HCT116 (cell line): ENCODE measurements at regions of chr17 and their contacts with region 1.

Region 1: DNA sequence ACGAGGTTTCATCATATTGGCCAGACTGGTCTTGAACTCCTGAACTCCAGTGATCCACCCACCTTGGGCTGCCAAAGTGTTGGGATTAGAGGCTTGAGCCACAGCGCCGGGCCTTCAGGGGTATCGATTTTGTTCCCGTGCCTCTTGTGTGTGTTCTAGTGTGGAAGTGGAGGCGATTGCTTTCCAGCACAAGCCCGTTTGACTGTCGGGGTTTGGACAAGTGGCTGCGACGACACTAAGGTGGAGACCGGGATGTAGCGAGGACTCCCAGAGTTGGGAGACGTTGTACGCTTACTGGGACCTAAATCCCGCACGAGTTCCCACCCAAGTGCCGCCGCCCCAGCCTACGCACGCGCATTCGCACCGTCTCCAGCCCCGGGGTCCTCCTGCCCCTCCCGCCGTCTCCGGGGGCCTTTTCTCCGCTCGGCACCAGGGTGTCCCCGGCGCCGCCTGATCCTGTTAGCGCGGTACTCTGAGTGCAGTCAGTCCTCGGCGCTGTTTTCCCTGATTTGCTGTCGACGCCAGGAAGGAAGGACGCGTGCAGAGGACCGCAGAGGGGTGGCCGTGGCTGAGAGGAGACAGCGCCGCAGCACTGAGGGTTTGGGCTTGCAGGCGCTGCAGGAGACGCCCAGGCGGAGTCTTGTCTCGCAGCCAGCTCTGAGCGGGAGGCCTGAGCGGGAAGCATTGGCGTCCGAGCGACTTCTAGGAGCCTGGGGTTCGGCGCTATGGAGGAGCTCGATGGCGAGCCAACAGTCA is at the start of gene NUP85:
- DNase-seq: peak; percentile 96
- ATAC-seq: peak; percentile 87
- H3K4me3 ChIP-seq: peak within 1 kb of the TSS; percentile 75 to 85
- H3K27ac ChIP-seq: peak within 1 kb of the TSS; percentile 85
- H3K4me1 ChIP-seq: peaks cover 11 to 27% of the 10 kb centered on the region in 2 experiments
- H3K27me3 ChIP-seq: no peaks in the 10 kb centered on the region
- CTCF ChIP-seq: no peak
- POLR2A ChIP-seq: peak; percentile 98
- RAD21 ChIP-seq: no peak
- total RNA-seq, gene NUP85: 164 TPM

Region 2: DNA sequence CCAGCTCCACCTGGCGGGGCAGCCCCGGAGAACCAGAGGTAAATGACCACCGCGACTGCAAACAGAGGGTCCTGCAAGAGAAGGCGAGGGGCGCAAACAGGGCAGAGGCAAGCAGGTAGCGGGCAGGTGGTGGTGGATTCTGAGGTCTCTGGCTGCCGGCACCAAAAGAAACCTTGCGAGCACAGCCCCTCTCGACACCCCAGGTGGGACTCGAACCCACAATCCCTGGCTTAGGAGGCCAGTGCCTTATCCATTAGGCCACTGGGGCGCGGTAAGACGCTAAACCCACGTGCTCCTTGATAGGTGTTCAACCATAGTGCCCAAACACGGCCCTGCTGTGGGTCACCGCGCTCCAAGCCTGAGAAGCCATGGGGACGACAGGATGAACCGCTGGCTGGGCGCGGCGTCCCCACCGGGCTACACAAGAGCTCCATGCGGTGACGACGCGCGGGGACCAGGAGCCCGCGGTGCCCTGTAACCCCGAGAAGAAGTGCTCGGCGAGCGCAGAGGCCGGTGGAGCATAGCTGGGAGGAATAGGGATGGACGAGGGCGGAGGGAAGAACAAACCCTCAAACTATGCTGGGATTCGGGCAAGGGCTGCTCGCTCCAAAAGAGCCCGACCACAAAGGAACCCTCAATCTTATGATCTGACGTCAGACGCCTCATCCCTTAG is 170.8 kb before region 1 on chr17:
- CTCF ChIA-PET with region 1: interaction called, 7 read pairs
- POLR2A ChIA-PET with region 1: interaction called, 3 read pairs
- RAD21 ChIA-PET with region 1: interaction called in 1 of 2 experiments, 3 read pairs
- intact Hi-C with region 1: loop called (anchors 2 kb)
- DNase-seq: peak; percentile 93
- ATAC-seq: peak; percentile 62
- H3K4me3 ChIP-seq: peak overlapping the region; percentile 46 to 57
- H3K27ac ChIP-seq: peak overlapping the region; percentile 87
- H3K4me1 ChIP-seq: peaks cover 45 to 58% of the 10 kb centered on the region in 2 experiments
- H3K27me3 ChIP-seq: no peaks in the 10 kb centered on the region
- CTCF ChIP-seq: peak in 2 of 3 experiments; percentile 7 to 37; a peak in 1 of 6 replicates
- POLR2A ChIP-seq: no peak
- RAD21 ChIP-seq: no peak

Region 3: GRCh38 chr17:75059369-75060345 is 145.6 kb before region 1 on chr17:
- CTCF ChIA-PET with region 1: interaction called, 19 read pairs
- POLR2A ChIA-PET with region 1: no interaction called
- RAD21 ChIA-PET with region 1: interaction called, 4 to 7 read pairs
- intact Hi-C with region 1: no loop called
- DNase-seq: no peak
- ATAC-seq: peak; percentile 67; the same call in 1 of the 2 replicates
- H3K4me3 ChIP-seq: no peak overlapping the region
- H3K27ac ChIP-seq: no peak overlapping the region
- H3K4me1 ChIP-seq: peaks cover 0 to 4% of the 10 kb centered on the region in 2 experiments; a peak in 1 of 4 replicates
- H3K27me3 ChIP-seq: no peaks in the 10 kb centered on the region
- CTCF ChIP-seq: peak; percentile 39 to 54 (median 41); a peak in 5 of 6 replicates
- POLR2A ChIP-seq: no peak
- RAD21 ChIP-seq: peak; percentile 69

Region 4: GRCh38 chr17:75069783-75070182 is 135.4 kb before region 1 on chr17:
- CTCF ChIA-PET with region 1: interaction called, 25 read pairs
- POLR2A ChIA-PET with region 1: no interaction called
- RAD21 ChIA-PET with region 1: interaction called in 1 of 2 experiments, 10 read pairs
- intact Hi-C with region 1: loop called (anchors 5 kb)
- DNase-seq: no peak
- ATAC-seq: peak; percentile 76
- H3K4me3 ChIP-seq: no peak overlapping the region
- H3K27ac ChIP-seq: no peak overlapping the region
- H3K4me1 ChIP-seq: peaks cover 14% of the 10 kb centered on the region in 2 experiments
- H3K27me3 ChIP-seq: no peaks in the 10 kb centered on the region
- CTCF ChIP-seq: peak; percentile 55 to 87 (median 57)
- POLR2A ChIP-seq: no peak
- RAD21 ChIP-seq: peak; percentile 90

Region 5: DNA sequence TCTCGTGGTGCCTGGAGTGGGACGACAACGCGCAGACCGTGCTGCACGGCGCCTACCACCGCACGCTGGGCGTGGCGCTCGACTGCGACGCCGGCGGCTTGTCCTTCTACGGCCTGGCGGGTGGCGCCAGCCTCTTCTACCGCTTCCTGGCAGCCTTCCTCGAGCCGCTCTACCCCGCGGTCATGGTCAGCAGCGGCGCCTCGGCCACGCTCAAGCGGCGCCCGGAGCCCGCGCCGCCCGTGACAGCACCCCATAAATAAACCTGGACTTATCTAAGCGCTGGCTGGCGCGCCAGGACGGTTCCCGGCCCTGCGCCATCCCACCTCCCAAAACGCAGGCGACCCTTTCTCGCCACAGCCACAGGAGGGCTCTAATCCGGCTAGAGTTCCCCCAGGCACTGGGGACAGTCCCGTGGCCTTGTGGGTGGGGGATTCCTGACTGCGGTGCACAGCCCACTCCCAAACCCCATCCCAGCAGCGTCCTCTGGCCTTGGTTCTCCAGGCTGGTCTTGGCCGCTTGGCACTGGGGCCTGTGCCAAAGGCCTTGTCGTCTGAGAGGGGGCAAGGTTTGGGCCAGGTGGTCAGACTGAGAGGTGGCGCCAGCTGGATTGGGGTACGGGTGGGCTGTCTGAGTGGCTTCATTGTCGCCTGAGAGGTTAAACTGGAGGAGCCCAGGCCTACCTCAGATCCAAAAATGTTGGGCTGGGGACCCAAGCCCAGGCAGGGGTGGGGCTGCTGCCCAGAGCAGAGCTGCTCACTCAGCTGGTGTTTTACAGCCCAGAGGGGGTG is 127.5 kb before region 1 on chr17:
- CTCF ChIA-PET with region 1: interaction called, 10 read pairs
- POLR2A ChIA-PET with region 1: no interaction called
- RAD21 ChIA-PET with region 1: no interaction called
- intact Hi-C with region 1: loop called (anchors 5 kb)
- DNase-seq: no peak
- ATAC-seq: peak; percentile 45
- H3K4me3 ChIP-seq: peak overlapping the region; percentile 31 to 46
- H3K27ac ChIP-seq: peak overlapping the region; percentile 100
- H3K4me1 ChIP-seq: peaks cover 76 to 79% of the 10 kb centered on the region in 2 experiments
- H3K27me3 ChIP-seq: no peaks in the 10 kb centered on the region
- CTCF ChIP-seq: peak in 2 of 3 experiments; percentile 29 to 31; a peak in 2 of 6 replicates
- POLR2A ChIP-seq: no peak
- RAD21 ChIP-seq: no peak; the same call in 1 of the 2 replicates

Region 6: GRCh38 chr17:75124041-75124818 is 81.0 kb before region 1 on chr17:
- CTCF ChIA-PET with region 1: interaction called, 10 read pairs
- POLR2A ChIA-PET with region 1: interaction called, 4 read pairs
- RAD21 ChIA-PET with region 1: no interaction called
- intact Hi-C with region 1: no loop called
- DNase-seq: peak; percentile 99
- ATAC-seq: peak; percentile 90
- H3K4me3 ChIP-seq: peak overlapping the region; percentile 44 to 55
- H3K27ac ChIP-seq: peak overlapping the region; percentile 93
- H3K4me1 ChIP-seq: peaks cover 40 to 71% of the 10 kb centered on the region in 2 experiments
- H3K27me3 ChIP-seq: no peaks in the 10 kb centered on the region
- CTCF ChIP-seq: 0 out of 6 replicates have a peak, but pooled peaks of 1 of the 3 experiments have one; percentile 3
- POLR2A ChIP-seq: peak; percentile 77
- RAD21 ChIP-seq: no peak

Region 7: GRCh38 chr17:75261336-75262111 is 56.3 kb after region 1 on chr17 and contains the starts of genes GGA3 and MRPS7:
- CTCF ChIA-PET with region 1: no interaction called
- POLR2A ChIA-PET with region 1: interaction called, 3 read pairs
- RAD21 ChIA-PET with region 1: no interaction called
- intact Hi-C with region 1: loop called (anchors 1 kb)
- DNase-seq: peak; percentile 89
- ATAC-seq: peak; percentile 95
- H3K4me3 ChIP-seq: peak within 1 kb of the TSS; percentile 83 to 97
- H3K27ac ChIP-seq: peak within 1 kb of the TSS; percentile 80
- H3K4me1 ChIP-seq: peaks cover 17 to 21% of the 10 kb centered on the region in 2 experiments
- H3K27me3 ChIP-seq: no peaks in the 10 kb centered on the region
- CTCF ChIP-seq: no peak
- POLR2A ChIP-seq: no peak
- RAD21 ChIP-seq: no peak; the same call in 1 of the 2 replicates
- total RNA-seq, gene GGA3: 58.3 TPM
- total RNA-seq, gene MRPS7: 104 TPM